Gastrocnemius medialis (tissue), 4 donors: ENCODE measurements at regions of chr6 and their contacts with region 1.

Region 1: GRCh38 chr6:53794720-53795253 is at the start of gene LRRC1:
- DNase-seq: peak; percentile 39 to 57
- ATAC-seq: peak; percentile 72 to 80
- H3K4me3 ChIP-seq: peak within 1 kb of the TSS; percentile 62 to 77 (median 73)
- H3K27ac ChIP-seq: peak within 1 kb of the TSS in 3 of 4 donors; percentile 27 to 62 (median 46)
- H3K4me1 ChIP-seq: peaks cover 20 to 21% of the 10 kb centered on the region in 2 donors
- H3K27me3 ChIP-seq: peaks cover 28 to 38% (median 36%) of the 10 kb centered on the region in 3 donors
- CTCF ChIP-seq: no peak
- POLR2A ChIP-seq: peak; percentile 2 to 30
- total RNA-seq, gene LRRC1: 0.67 to 8.5 (median 2.4) TPM

Region 2: DNA sequence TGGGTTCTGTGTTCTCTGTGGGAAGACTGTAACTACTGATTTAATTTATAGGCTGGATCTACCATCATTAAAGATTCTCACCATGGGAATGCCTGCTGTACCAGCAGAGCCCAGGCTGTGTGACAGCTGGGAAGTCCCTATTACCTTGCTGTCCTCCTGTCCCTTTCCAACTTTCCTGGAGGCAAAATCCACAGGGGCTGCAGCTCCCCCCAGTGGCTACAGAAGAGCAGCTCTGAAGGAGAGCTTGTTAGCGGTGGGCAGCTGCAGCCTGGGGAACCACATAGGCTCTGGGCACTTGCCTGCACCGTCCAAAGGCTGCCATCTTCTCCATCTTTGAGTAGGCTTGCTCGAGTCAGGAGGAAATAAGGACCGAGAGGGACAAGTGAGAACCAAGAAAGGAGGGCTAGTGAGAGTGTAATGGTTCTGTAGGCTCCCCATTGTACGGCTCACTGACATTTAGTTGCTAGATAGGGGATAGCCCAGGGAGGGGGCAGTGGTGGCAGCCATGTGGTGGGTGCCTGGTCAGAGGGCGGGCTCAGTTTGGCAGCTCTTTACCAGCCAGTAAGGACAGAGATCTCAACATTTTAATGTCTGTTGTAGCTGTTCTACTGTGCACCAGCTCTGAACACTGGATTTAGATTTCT is 161.4 kb after region 1 on chr6:
- in situ Hi-C with region 1: no loop called
- intact Hi-C with region 1: loop called (anchors 10 kb)
- DNase-seq: peak in 1 of 2 donors; percentile 23
- ATAC-seq: peak; percentile 47 to 74
- H3K4me3 ChIP-seq: no peak overlapping the region
- H3K27ac ChIP-seq: no peak overlapping the region
- H3K4me1 ChIP-seq: no peaks in the 10 kb centered on the region
- H3K27me3 ChIP-seq: no peaks in the 10 kb centered on the region
- CTCF ChIP-seq: peak in 3 of 5 experiments; percentile 30 to 42 (median 35)
- POLR2A ChIP-seq: no peak